AG04449 (cell line): ENCODE measurements at regions of chr14 and their contacts with region 1.

Region 1: DNA sequence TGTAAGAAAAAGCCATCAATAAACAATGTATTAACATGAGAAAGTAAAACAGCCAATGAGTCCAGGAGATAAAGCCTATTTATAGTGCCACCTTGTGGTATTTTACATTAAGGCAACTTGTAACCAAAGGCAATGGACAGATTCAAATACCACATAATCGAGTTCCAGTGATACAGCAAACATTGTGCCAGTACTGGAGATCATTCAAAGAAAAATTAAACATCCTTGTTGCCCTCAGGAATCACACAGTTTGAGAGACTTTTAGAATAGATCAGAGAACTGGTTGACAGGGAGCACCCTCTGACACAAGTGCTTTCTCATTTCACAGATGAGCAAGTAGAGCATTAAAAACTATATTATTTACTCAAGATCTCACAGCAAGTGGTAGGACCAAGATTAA is 98.1 kb downstream of the DDHD1 start:
- DNase-seq: no peak
- H3K4me3 ChIP-seq: no peak overlapping the region
- CTCF ChIP-seq: peak; percentile 49

Region 2: DNA sequence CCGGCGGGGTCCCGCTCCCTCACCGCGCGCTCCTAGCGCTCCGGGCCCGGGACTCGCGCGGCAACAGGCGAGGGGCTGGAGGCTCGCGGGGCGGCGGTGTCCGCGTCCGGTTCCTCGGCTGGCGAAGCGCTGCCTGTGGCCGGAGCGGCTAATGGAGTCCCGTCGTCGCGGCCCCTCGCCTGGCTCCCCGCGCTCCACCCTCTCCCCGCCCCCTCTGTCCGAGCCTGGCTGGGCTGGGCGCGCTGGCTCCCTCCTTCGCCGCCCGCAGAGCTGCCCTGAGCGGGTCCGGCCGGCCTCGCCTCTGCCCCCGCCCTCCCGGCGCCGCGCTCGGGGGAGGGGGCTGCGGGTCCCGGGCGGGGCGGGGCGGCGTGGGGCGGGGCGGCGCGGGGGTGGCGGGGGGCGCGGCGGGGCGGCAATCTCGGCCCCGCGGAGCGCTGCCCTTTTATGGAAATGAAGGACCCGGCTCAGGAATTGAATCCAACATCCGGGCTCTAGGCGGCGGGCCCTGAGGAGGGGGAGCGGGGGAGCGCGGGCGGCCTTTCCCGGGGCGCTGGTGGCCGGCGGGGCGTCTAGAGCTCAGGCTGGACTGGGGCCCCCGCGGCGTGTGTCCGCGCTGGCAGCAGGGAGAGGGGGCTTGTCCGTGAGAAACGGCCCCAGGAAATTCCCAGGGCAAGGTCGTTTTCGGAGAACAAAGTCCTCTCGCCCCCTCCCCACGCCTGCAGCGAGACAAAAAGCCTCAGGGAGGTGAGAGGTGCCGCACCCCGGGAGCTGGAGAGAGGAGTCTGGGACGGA is 103.9 kb before region 1 on chr14 and contains the start of gene FERMT2:
- CTCF ChIA-PET with region 1: interaction called, 14 read pairs
- POLR2A ChIA-PET with region 1: no interaction called
- DNase-seq: no peak
- H3K4me3 ChIP-seq: peak within 1 kb of the TSS; percentile 99
- CTCF ChIP-seq: no peak

Region 3: GRCh38 chr14:53032161-53032803 is 22.7 kb before region 1 on chr14:
- CTCF ChIA-PET with region 1: interaction called, 12 read pairs
- POLR2A ChIA-PET with region 1: no interaction called
- DNase-seq: peak; percentile 38
- H3K4me3 ChIP-seq: no peak overlapping the region
- CTCF ChIP-seq: no peak

Region 4: DNA sequence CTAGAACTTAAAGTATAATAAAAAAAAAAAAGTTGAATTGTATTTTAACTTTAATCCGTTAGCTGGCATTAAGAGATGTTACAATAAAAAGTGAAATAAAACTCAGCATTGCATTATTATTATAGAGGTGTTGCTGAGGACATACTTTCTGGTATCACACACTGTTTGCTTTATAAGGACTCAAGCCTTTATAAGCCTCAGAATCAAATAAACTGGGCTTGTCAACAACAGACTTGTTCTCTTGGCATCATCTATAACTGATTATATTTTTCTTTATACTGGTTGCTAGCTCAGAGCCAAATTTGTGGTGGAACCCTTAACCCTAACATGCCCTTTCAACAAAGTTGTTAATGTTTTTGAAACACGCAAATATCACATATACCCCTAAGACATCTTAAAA is 35.9 kb after region 1 on chr14:
- CTCF ChIA-PET with region 1: interaction called, 10 read pairs
- POLR2A ChIA-PET with region 1: no interaction called
- DNase-seq: no peak
- H3K4me3 ChIP-seq: no peak overlapping the region
- CTCF ChIP-seq: no peak